Breast epithelium (tissue), 4 donors: ENCODE measurements at regions of chr7 and their contacts with region 1.

Region 1: GRCh38 chr7:38107486-38107893 is 70.6 kb upstream of the STARD3NL start:
- DNase-seq: peak in 1 of 2 donors; percentile 30
- H3K4me3 ChIP-seq: no peak overlapping the region
- H3K27ac ChIP-seq: no peak overlapping the region
- H3K4me1 ChIP-seq: no peaks in the 10 kb centered on the region
- H3K27me3 ChIP-seq: no peaks in the 10 kb centered on the region
- CTCF ChIP-seq: peak; percentile 29 to 52 (median 50)
- POLR2A ChIP-seq: no peak

Region 2: DNA sequence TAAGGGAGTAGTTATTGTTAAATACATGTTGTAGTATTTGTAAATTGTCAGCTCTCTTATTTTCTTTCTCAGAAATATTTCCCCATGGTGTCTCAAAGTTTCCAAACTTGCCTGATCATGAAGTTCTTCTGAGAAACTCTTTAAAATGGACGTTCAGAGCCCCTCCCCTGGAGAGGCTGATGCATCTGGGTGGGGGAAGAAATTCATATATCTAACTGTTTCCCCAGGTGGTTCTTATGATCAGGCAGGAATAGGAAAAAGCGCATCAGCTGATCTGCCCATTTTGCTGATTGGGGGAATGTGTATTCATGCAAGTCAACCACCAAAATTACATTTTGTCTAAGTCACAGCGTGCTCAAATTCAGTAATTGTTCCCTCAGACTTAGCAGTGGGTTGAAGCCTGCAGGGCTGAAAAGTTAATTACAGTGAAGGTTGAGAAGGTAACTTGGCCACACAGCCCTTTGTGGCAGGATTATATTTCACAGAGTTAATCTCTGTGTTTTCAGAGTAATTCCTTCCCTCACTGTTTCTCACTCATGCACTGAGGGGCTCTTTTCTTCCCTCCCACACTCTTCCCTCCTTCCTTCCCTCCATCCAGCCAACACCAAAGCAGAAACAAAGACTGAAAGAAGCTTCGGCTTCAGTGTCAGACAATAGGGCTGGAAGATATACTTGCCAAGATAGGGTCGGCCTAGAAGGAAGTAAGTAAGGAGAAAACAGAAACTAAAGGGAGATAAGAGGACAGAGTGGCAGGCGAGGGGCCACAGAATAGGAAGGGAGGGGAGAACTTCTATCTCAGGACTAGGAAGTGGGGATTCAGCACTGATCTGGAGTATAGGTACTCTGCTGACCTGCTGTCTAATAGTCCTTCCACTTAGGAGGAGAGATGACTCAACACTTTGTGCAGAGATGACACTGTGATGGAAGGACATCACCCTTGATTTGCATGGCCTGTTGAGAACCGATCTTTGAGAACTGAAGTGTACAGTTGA is 20.0 kb after region 1 on chr7:
- intact Hi-C with region 1: no loop called
- DNase-seq: no peak
- H3K4me3 ChIP-seq: no peak overlapping the region
- H3K27ac ChIP-seq: no peak overlapping the region
- H3K4me1 ChIP-seq: no peaks in the 10 kb centered on the region
- H3K27me3 ChIP-seq: no peaks in the 10 kb centered on the region
- CTCF ChIP-seq: no peak
- POLR2A ChIP-seq: no peak

Region 3: GRCh38 chr7:38222481-38223096 is 115.1 kb after region 1 on chr7:
- intact Hi-C with region 1: loop called (anchors 5 kb)
- DNase-seq: no peak
- H3K4me3 ChIP-seq: no peak overlapping the region
- H3K27ac ChIP-seq: no peak overlapping the region
- H3K4me1 ChIP-seq: no peaks in the 10 kb centered on the region
- H3K27me3 ChIP-seq: no peaks in the 10 kb centered on the region
- CTCF ChIP-seq: peak; percentile 83 to 88 (median 86)
- POLR2A ChIP-seq: no peak